ENCODE measurements at regions of chr18 and their contacts with region 1.

Region 1: DNA sequence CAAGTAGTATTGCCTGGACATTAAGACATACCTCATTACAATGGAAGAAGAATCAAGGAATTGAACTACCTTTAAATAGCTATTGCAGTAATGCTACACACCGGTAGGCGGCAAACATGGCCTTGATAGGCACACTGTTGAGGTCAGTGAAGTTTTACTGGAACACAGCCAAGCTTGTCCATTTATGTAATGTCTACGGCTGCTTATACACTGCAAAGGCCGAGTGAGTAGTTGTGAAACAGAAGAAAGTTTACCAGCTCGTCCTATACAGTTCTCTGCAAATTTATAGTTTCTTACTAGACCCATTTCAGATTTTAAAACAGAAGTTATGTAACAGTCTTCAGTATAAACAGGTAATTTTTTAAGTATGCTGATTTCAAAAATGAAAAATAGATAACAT is 38.8 kb downstream of the PPP4R1 start:
- DNase-seq: peak; percentile 37 to 69
- ATAC-seq: peak; percentile 93 to 99 (median 98)
- H3K4me3 ChIP-seq: peak overlapping the region; percentile 24
- H3K27ac ChIP-seq: no peak overlapping the region
- H3K4me1 ChIP-seq: peaks cover 6% of the 10 kb centered on the region
- H3K27me3 ChIP-seq: no peaks in the 10 kb centered on the region
- CTCF ChIP-seq: peak; percentile 87

Region 2: DNA sequence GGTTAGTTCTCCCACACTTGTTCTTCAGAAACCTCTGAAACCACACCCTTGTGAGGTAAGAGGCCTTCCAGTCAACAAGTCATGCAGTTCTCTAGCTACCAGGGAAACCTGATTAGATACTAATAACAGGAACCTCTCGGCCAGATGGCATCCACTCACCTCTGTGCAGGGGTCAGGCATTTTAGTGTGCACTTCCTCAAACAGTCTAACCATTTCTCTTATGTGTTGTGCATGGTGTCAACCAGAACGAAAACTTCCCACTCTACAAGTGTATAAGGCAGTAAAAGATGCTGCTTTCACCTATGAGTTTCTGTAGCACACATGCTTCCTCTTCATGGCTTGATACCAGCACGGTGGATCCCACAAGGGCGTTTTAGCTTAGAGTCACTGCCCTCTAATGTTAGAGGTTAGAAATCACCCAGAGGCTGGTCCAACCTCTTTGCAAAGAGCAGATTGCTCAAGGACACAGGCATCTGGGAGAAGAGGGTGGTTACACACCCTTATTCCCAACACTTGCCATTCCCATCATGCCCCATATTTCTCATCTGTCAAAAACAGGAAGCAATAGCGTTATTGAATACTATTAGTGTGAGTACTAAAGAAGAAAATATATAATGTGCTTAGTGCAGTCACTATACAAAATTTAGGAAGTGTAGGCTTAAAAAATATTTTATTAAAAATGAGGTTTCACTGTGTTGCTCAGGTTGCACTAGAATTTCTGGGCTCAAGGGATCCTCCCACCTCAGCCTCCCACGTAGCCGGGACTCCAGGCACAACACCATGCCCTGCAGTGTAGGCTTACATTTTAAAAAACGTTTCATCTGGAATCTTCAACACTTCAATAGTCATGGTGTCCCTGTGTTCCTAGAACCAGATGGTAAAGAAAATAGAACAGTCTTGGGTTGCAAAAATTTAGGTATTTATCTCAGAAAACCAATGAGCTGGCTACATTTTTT is 98.0 kb after region 1 on chr18:
- intact Hi-C with region 1: loop called in 1 of 2 experiments (anchors 10 kb)
- DNase-seq: no peak
- ATAC-seq: peak in 1 of 4 donors; percentile 57
- H3K4me3 ChIP-seq: no peak overlapping the region
- H3K27ac ChIP-seq: no peak overlapping the region
- H3K4me1 ChIP-seq: no peaks in the 10 kb centered on the region
- H3K27me3 ChIP-seq: peaks cover 0 to 13% (median 7%) of the 10 kb centered on the region in 3 donors
- CTCF ChIP-seq: no peak

Region 3: GRCh38 chr18:9743200-9744016 is 167.8 kb after region 1 on chr18:
- intact Hi-C with region 1: no loop called
- DNase-seq: peak; percentile 39 to 50
- ATAC-seq: peak in 3 of 4 donors; percentile 34 to 59 (median 48)
- H3K4me3 ChIP-seq: no peak overlapping the region
- H3K27ac ChIP-seq: no peak overlapping the region
- H3K4me1 ChIP-seq: peaks cover 4% of the 10 kb centered on the region
- H3K27me3 ChIP-seq: no peaks in the 10 kb centered on the region
- CTCF ChIP-seq: no peak

Region 4: GRCh38 chr18:9771261-9771976 is 195.9 kb after region 1 on chr18:
- intact Hi-C with region 1: loop called (anchors 5 kb)
- DNase-seq: peak; percentile 86 to 92
- ATAC-seq: peak; percentile 97 to 99 (median 98)
- H3K4me3 ChIP-seq: no peak overlapping the region
- H3K27ac ChIP-seq: no peak overlapping the region
- H3K4me1 ChIP-seq: no peaks in the 10 kb centered on the region
- H3K27me3 ChIP-seq: no peaks in the 10 kb centered on the region
- CTCF ChIP-seq: peak; percentile 98

Region 5: GRCh38 chr18:9898792-9899549 is 323.4 kb after region 1 on chr18:
- intact Hi-C with region 1: no loop called
- DNase-seq: no peak
- ATAC-seq: no peak
- H3K4me3 ChIP-seq: no peak overlapping the region
- H3K27ac ChIP-seq: no peak overlapping the region
- H3K4me1 ChIP-seq: no peaks in the 10 kb centered on the region
- H3K27me3 ChIP-seq: no peaks in the 10 kb centered on the region
- CTCF ChIP-seq: no peak

Region 6: DNA sequence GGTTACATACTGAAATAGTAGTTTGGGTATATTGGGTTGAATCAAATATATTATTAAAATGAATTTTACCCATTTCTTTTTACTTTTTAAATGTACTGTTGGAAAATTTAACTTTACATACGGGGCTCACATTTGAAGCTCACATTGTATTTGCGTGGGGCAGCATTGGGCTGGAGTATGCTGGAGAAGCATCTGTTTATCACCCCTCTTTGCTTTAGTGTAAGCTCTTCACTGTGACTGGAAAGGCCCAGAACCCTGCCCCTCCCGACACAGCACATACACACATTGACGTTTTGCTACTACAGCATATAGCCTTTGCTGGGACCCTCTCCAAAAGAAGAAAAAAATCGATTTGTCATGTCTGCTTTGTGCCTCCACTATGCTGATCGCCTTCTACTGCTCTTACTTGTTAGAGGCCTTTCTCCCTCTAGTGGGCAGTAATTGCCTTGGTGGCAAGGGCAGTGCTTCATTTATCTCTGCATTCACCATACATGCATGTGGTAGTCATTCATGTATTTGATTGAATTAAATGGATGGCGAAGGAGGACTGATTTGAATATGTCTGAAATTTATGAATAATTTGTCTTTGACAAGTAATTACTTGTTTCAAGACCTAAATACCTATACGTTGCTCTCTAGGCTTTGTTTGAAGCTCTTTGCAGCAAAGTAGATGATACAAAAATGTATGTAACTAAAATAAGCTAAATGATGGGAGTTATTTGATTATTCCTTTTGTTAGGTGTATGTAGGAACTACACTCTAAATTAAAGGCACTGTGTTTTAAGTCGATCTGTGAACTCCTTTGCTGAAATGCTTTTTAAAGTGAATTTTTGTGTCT is 375.7 kb after region 1 on chr18:
- intact Hi-C with region 1: loop called in 1 of 2 experiments (anchors 10 kb)
- DNase-seq: no peak
- ATAC-seq: peak; percentile 54 to 76 (median 68)
- H3K4me3 ChIP-seq: no peak overlapping the region
- H3K27ac ChIP-seq: no peak overlapping the region
- H3K4me1 ChIP-seq: peaks cover 12% of the 10 kb centered on the region
- H3K27me3 ChIP-seq: no peaks in the 10 kb centered on the region
- CTCF ChIP-seq: peak; percentile 59